A549 (cell line): ENCODE measurements at regions of chr9 and their contacts with region 1.

Region 1: DNA sequence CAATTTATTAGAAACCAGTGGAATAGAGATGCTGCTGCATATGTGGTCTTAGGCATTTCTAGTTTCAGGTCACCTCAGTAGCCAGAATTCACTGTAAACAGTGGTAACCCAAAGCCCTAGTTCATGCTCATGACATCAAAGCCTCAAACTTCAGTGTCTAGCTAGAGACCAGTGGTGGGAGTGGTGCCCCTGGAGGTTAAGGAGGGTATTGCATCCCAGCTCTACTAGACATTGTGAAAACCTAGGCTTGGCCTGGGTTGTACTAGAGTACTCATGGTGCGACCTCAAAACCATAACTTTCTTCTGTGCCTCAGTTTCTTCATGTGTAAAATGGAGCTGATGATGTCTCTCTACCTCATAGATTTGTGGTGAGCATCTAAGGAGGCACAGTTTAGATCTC is 18.8 kb downstream of the COL5A1 start:
- DNase-seq: peak in 1 of 2 experiments; percentile 67
- ATAC-seq: no peak
- H3K4me3 ChIP-seq: no peak overlapping the region
- H3K27ac ChIP-seq: no peak overlapping the region
- H3K4me1 ChIP-seq: peaks cover 17% of the 10 kb centered on the region; the same call in 2 of the 3 replicates
- CTCF ChIP-seq: peak; percentile 20; the same call in 1 of the 3 replicates
- EP300 ChIP-seq: no peak
- POLR2A ChIP-seq: no peak
- RAD21 ChIP-seq: no peak

Region 2: DNA sequence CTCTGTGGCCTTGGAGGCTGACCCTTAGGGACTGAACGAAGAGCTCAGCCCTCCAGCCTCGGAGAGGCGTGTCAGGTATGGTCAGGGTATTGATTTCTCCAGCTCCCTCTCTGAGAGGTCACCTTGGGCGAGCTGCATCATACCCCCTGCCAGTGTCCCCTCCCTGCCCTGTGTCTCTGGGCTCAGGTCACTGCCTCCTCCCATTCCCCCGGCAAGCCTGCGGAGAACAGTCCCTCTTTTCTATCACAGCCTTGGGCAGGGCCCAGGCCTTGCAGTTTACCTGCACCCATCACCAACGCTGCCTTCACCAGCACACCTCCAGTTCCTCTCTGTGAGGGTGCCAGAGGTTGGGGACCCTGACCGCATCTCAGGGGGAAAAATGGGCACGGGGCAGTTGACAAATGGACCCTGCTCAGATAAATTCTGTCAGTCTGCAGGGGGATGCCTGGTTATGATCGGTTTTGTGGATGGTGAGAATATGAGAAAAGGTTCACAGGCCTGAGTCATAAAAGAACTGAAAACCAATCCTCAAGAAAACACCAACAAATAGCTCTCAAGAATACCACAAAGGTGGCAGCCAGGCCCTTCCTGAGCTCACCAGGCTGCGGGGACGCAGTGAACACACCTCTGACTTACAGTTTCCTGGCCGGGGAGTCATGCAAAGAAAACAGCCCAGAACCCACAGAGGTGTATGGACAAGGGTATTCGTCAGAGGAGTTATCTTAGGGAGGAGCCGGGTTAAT is 358.8 kb before region 1 on chr9:
- CTCF ChIA-PET with region 1: no interaction called
- POLR2A ChIA-PET with region 1: no interaction called
- DNase-seq: no peak
- ATAC-seq: 0 out of 6 replicates have a peak, but pooled peaks of 1 of the 2 experiments have one; percentile 27
- H3K4me3 ChIP-seq: no peak overlapping the region
- H3K27ac ChIP-seq: no peak overlapping the region
- H3K4me1 ChIP-seq: no peaks in the 10 kb centered on the region
- CTCF ChIP-seq: no peak
- EP300 ChIP-seq: no peak
- POLR2A ChIP-seq: no peak
- RAD21 ChIP-seq: no peak

Region 3: DNA sequence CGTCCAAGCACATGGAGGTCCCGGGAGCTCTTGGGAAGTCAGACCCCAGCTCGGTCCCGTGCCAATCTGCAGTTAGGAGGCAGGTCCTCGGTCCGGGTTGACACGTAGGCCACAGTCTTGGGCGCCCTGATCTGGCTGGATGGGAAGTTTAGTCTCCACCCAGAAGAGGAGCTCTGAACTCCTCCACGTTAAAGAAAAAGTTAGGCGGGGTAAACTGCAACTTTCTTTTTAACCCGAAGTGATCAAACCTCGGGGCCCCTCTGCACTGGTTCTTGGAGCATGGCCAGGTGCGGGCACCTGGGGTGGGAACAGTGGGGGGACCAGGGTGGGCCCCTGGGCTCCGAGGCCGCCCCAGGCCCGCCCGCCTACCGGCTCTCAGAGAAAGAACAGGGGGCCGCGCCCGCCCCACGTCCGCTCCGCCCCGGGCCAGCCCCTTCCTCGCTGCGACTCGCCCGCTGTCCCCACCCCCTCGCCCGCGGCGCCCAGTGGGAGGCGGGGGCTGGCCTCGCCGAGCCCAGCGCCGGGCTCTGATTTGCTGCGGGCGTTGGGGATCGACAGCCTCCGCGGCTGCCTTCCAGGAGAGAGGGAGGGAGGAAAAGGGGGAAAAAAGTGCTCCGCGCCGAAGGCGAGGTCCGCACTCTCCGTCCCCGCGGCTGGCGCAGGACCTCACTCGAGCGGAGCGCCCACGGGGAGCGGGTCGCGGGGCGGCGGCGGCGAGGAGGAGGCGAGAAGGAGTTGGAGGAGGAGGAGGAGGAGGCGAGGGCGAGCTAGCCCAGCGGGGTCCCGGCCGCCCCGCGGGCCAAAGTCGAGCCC is 19.0 kb before region 1 on chr9 and contains the start of gene COL5A1:
- CTCF ChIA-PET with region 1: interaction called, 18 read pairs
- POLR2A ChIA-PET with region 1: no interaction called
- DNase-seq: peak; percentile 84
- ATAC-seq: peak; percentile 74 to 90
- H3K4me3 ChIP-seq: peak within 1 kb of the TSS; percentile 73
- H3K27ac ChIP-seq: peak within 1 kb of the TSS; percentile 78 to 93
- H3K4me1 ChIP-seq: peaks cover 55% of the 10 kb centered on the region
- CTCF ChIP-seq: no peak
- EP300 ChIP-seq: no peak
- POLR2A ChIP-seq: peak; percentile 72
- RAD21 ChIP-seq: 0 out of 5 replicates have a peak, but pooled peaks of 1 of the 2 experiments have one; percentile 10
- polyA plus RNA-seq, gene COL5A1: 15.2 and 16.1 TPM in 2 replicates